ENCODE measurements at regions of chr18 and their contacts with region 1.

Region 1: DNA sequence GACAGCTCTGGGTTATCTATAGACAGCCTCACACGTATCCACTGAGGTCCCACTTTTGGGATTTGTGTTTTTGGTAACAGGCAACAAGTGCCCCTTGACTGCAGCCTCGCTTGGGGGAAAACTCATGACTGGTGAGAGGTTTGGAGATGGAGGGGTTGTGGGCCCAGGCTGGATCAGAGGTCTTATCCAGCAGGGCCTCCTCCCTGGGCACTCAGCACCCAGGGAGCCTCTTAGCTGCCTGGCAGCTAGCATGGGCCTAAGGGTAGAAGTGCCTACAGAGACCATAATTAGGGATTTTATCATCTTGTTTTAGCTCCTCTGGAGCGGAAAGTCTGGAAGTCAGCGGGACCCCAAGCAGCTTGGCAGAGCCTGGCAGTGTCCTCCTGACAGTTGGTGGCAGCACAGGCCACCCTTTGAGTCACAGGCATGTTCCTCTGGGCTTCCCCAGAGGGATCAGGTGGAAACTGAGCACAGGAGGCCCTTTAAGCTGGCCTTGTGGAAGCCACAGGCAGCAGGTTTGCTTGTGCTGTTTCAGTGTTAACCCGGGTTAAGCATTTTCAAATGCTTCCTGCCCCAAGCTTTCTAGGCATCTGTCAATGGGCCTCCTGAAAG is 143.1 kb downstream of the KCTD1 start:
- DNase-seq: peak; percentile 51
- H3K4me3 ChIP-seq: no peak overlapping the region
- H3K27ac ChIP-seq: no peak overlapping the region
- H3K4me1 ChIP-seq: peaks cover 17% of the 10 kb centered on the region
- H3K27me3 ChIP-seq: no peaks in the 10 kb centered on the region
- CTCF ChIP-seq: peak; percentile 34 to 67

Region 2: GRCh38 chr18:26335571-26336487 is 69.5 kb before region 1 on chr18:
- CTCF ChIA-PET with region 1: no interaction called
- dilution Hi-C with region 1: no loop called
- in situ Hi-C with region 1: no loop called
- intact Hi-C with region 1: no loop called
- DNase-seq: no peak
- H3K4me3 ChIP-seq: no peak overlapping the region
- H3K27ac ChIP-seq: no peak overlapping the region
- H3K4me1 ChIP-seq: peaks cover 4% of the 10 kb centered on the region
- H3K27me3 ChIP-seq: no peaks in the 10 kb centered on the region
- CTCF ChIP-seq: no peak

Region 3: DNA sequence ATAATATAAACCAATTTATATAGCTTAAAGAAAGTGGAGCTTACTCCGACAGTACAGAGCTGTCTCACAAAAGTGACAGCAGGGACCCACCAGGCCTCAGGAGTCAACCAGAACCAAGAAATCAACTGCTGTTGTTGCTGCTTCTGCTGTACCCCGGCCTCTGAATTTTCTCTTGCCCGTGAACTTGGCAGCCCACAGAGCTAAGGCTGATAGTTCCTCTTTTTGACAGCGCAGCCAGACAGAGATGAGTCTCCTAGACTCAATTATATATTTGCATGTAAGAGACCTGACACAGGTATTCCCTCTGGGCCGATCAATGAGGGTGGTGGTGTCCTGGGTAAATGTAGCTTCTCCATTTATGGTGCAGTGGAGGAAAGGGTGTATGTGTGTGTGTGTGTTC is 33.7 kb after region 1 on chr18:
- CTCF ChIA-PET with region 1: no interaction called
- dilution Hi-C with region 1: no loop called
- in situ Hi-C with region 1: no loop called
- intact Hi-C with region 1: loop called (anchors 2 kb)
- DNase-seq: no peak
- H3K4me3 ChIP-seq: no peak overlapping the region
- H3K27ac ChIP-seq: no peak overlapping the region
- H3K4me1 ChIP-seq: peaks cover 43% of the 10 kb centered on the region
- H3K27me3 ChIP-seq: no peaks in the 10 kb centered on the region
- CTCF ChIP-seq: no peak

Region 4: DNA sequence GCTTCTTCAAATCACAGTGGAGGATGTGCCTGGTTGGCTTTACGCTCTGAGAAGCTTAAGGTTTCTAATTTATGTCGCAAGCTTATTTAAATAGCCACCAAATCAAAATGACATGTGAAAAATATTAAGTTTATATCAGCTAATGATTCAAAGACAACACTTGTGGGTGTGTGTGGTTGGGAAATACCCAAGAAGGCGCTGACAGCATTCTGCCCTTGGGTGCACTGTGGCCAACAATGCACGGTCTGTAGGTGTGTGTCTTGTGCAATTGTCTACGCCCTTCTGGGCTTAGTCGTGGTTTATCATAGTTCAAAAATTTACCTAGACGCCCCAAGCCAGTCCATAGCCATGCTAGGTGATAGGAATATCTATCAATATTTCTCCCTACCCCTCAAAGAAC is 82.1 kb after region 1 on chr18:
- CTCF ChIA-PET with region 1: no interaction called
- dilution Hi-C with region 1: no loop called
- in situ Hi-C with region 1: no loop called
- intact Hi-C with region 1: loop called (anchors 2 kb)
- DNase-seq: peak; percentile 96
- H3K4me3 ChIP-seq: no peak overlapping the region
- H3K27ac ChIP-seq: peak overlapping the region; percentile 98
- H3K4me1 ChIP-seq: peaks cover 67% of the 10 kb centered on the region
- H3K27me3 ChIP-seq: no peaks in the 10 kb centered on the region
- CTCF ChIP-seq: no peak

Region 5: DNA sequence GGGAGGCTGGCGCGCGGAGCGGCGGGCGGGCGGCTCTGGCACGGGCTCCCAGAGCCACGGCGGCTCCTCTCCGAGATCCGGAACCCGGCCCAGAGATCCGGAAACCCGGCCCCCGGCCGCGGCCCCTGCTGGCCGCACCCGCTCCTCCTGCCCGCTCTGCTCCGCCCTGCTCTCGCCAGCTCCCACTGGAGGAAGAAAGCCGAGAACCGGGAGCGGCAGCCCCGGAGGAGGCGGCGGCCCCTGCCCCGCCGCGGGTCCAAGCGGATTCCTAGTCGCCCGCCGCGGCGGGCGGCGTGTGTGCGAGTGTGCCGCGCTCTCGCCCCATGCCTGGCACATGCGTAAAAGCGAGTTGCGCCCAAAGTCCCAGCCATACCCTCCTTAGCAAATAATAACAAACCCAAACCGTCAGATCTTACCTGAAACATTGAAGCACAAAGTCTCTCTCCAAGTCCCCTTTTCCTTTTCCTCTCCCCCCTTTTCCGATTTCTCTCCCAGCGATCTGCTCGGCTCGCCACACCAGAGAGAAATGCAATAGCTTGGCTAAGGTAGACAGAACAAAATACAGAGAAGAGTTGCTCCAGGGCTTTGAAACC is 251.7 kb after region 1 on chr18:
- CTCF ChIA-PET with region 1: no interaction called
- dilution Hi-C with region 1: no loop called
- in situ Hi-C with region 1: loop called in 1 of 2 experiments (anchors 5 kb)
- intact Hi-C with region 1: no loop called
- DNase-seq: peak; percentile 73
- H3K4me3 ChIP-seq: peak overlapping the region; percentile 56 to 79 (median 69)
- H3K27ac ChIP-seq: peak overlapping the region; percentile 11
- H3K4me1 ChIP-seq: peaks cover 16% of the 10 kb centered on the region
- H3K27me3 ChIP-seq: peaks cover 28% of the 10 kb centered on the region
- CTCF ChIP-seq: peak in 1 of 2 donors; percentile 39

Region 6: DNA sequence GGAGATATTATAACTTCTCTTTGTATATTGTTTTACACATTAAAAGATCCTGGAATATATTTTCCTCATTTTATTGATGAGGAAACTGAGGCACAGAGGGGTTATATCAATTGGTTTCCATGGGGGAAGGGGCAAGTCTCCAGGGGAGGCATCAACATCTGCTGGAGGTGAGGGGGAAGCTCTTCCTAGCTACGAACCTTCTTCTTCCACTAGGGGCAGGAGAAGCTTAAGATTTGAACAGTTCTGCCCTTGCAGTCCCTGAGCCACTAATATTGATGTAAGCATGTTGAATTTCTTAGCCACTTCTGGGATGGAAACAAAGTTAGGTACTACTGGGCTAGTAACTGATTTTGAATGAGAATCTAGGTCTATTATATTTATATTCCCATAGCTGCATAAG is 600.3 kb after region 1 on chr18:
- CTCF ChIA-PET with region 1: no interaction called
- dilution Hi-C with region 1: no loop called
- in situ Hi-C with region 1: loop called in 1 of 2 experiments (anchors 10 kb)
- intact Hi-C with region 1: loop called (anchors 5 kb)
- DNase-seq: no peak
- H3K4me3 ChIP-seq: no peak overlapping the region
- H3K27ac ChIP-seq: no peak overlapping the region
- H3K4me1 ChIP-seq: no peaks in the 10 kb centered on the region
- H3K27me3 ChIP-seq: no peaks in the 10 kb centered on the region
- CTCF ChIP-seq: peak; percentile 50 to 54